ENCODE measurements at regions of chrX and their contacts with region 1.

Region 1: GRCh38 chrX:45322382-45322781 is 121.7 kb upstream of the DIPK2B start:
- DNase-seq: peak; percentile 67
- H3K4me3 ChIP-seq: no peak overlapping the region
- H3K27ac ChIP-seq: peak overlapping the region; percentile 10
- H3K4me1 ChIP-seq: peaks cover 3% of the 10 kb centered on the region
- H3K27me3 ChIP-seq: no peaks in the 10 kb centered on the region
- CTCF ChIP-seq: peak; percentile 37 to 45
- POLR2A ChIP-seq: no peak

Region 2: DNA sequence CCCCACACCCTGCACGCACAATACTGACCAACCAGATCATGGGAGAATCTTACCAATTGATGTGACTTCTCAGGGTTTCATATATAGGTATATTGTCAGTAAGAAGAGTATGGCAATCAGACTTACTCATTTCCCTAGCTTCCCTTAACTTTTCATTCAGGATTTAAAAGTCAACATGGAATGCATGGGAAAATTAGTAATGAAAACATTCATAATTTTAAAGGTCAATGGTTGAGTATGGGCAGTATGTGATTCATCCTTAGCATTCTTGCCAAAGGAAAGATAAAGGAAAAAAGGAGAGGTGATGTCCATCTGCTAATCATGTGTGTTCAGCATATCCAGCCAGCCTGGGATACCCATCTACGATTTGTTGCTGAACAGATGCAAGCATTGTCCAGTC is 125.7 kb before region 1 on chrX:
- CTCF ChIA-PET with region 1: no interaction called
- POLR2A ChIA-PET with region 1: no interaction called
- dilution Hi-C with region 1: no loop called
- intact Hi-C with region 1: loop called (anchors 5 kb)
- DNase-seq: peak; percentile 86
- H3K4me3 ChIP-seq: no peak overlapping the region
- H3K27ac ChIP-seq: peak overlapping the region; percentile 91
- H3K4me1 ChIP-seq: peaks cover 53% of the 10 kb centered on the region
- H3K27me3 ChIP-seq: no peaks in the 10 kb centered on the region
- CTCF ChIP-seq: no peak
- POLR2A ChIP-seq: no peak

Region 3: DNA sequence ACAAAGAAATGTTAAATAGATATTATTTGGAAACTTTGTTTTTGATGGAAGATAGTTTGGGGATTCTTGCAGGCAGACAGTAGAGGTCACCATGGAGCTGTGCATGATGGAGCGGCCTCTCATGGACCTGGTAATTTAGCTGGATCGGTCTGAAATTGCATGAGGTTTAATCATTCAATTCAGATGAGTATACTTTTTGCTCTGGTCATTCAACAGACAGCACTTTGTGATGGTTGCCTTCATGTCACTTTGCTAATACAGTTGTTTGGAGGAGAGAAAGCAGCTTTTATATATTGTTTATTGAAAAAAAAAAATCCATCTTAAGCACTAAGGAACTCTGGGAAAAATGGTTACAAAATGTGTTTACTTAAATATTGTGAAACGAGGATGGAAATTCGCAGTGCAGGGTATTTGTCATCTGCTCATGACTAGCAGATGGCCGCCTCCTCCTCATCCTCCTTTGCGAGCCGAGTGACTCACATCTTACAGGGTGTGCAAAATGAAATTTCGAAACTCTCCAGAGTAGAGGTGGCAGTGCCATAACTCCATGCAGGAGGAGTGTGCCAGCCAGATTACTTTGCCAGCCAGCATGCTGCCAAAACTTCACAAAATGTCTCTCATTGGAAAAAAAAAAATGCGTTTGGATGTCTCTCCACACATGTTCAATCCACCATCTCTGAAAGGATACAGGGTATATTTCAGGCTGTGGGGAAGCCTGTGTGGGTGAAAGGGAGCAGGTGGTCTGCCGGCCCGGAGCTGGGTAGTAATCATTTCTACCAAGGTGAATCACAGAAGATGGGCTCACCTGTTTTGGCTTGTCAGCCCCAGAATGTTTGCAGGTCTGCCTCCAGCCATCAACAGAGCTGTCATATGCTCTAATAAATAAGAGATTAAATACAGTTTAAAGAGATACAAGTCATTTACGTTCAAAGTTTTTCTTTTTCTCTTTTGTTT is 193.2 kb after region 1 on chrX:
- CTCF ChIA-PET with region 1: interaction called, 32 read pairs
- POLR2A ChIA-PET with region 1: no interaction called
- dilution Hi-C with region 1: no loop called
- intact Hi-C with region 1: loop called (anchors 1 kb)
- DNase-seq: peak; percentile 67
- H3K4me3 ChIP-seq: no peak overlapping the region
- H3K27ac ChIP-seq: peak overlapping the region; percentile 66
- H3K4me1 ChIP-seq: peaks cover 26% of the 10 kb centered on the region
- H3K27me3 ChIP-seq: no peaks in the 10 kb centered on the region
- CTCF ChIP-seq: peak; percentile 43 to 53
- POLR2A ChIP-seq: no peak

Region 4: GRCh38 chrX:45621376-45622041 is 299.1 kb after region 1 on chrX:
- CTCF ChIA-PET with region 1: interaction called, 10 read pairs
- POLR2A ChIA-PET with region 1: interaction called, 4 read pairs
- dilution Hi-C with region 1: no loop called
- intact Hi-C with region 1: no loop called
- DNase-seq: peak; percentile 54
- H3K4me3 ChIP-seq: no peak overlapping the region
- H3K27ac ChIP-seq: peak overlapping the region; percentile 75
- H3K4me1 ChIP-seq: peaks cover 22% of the 10 kb centered on the region
- H3K27me3 ChIP-seq: no peaks in the 10 kb centered on the region
- CTCF ChIP-seq: no peak
- POLR2A ChIP-seq: peak; percentile 30

Region 5: DNA sequence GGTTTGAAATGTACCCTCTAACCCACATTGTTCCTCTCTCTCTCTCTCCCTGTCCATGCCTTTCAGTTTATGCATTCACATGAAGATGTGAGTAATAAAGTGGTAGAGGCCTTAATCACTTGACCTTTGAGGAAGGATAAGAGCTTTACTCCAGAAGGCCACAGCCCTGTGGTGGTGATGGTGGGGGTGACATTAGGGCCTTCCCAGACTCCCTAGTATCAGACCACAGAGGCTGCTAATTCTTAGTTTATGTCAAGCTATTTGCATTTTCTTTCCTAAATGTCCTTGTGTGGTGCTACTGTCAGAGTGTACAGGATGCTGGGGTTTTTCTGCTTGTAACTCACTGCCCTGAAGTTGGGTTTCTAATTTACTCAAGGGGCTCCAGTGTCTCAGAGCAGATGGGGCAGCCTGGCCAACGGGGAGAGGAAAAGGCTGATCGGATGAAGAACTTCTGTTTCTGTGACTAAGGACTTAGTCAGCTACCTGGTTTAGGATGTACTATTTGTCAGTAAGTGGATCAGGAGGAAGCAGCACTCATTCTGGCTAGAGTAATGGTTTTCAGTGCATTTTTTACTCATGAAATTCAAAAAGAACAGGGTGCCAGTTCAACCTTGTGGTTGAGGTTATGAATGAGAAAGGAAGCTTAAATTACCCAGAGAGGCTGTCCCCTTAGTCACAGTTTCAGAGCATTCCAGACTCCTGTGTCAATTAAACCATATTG is 387.9 kb after region 1 on chrX:
- CTCF ChIA-PET with region 1: interaction called, 6 read pairs
- POLR2A ChIA-PET with region 1: no interaction called
- dilution Hi-C with region 1: no loop called
- intact Hi-C with region 1: loop called (anchors 1 kb)
- DNase-seq: peak; percentile 76
- H3K4me3 ChIP-seq: no peak overlapping the region
- H3K27ac ChIP-seq: peak overlapping the region; percentile 95
- H3K4me1 ChIP-seq: peaks cover 56% of the 10 kb centered on the region
- H3K27me3 ChIP-seq: no peaks in the 10 kb centered on the region
- CTCF ChIP-seq: no peak
- POLR2A ChIP-seq: peak; percentile 46

Region 6: GRCh38 chrX:45758319-45758718 is 435.9 kb after region 1 on chrX:
- CTCF ChIA-PET with region 1: no interaction called
- POLR2A ChIA-PET with region 1: no interaction called
- dilution Hi-C with region 1: no loop called
- intact Hi-C with region 1: loop called (anchors 5 kb)
- DNase-seq: peak; percentile 86
- H3K4me3 ChIP-seq: peak overlapping the region in 1 of 3 experiments; percentile 23
- H3K27ac ChIP-seq: peak overlapping the region; percentile 94
- H3K4me1 ChIP-seq: peaks cover 90% of the 10 kb centered on the region
- H3K27me3 ChIP-seq: no peaks in the 10 kb centered on the region
- CTCF ChIP-seq: no peak
- POLR2A ChIP-seq: no peak

Region 7: GRCh38 chrX:46376246-46376885 is 1054.0 kb after region 1 on chrX:
- CTCF ChIA-PET with region 1: interaction called, 18 read pairs
- POLR2A ChIA-PET with region 1: no interaction called
- dilution Hi-C with region 1: no loop called
- intact Hi-C with region 1: loop called (anchors 5 kb)
- DNase-seq: peak; percentile 80
- H3K4me3 ChIP-seq: no peak overlapping the region
- H3K27ac ChIP-seq: no peak overlapping the region
- H3K4me1 ChIP-seq: peaks cover 4% of the 10 kb centered on the region
- H3K27me3 ChIP-seq: no peaks in the 10 kb centered on the region
- CTCF ChIP-seq: peak; percentile 21 to 32
- POLR2A ChIP-seq: no peak